Activated CD8-positive, alpha-beta T cell treated with anti-CD3 and anti-CD28 coated beads for 36 hours (primary cell): ENCODE measurements at regions of chr17 and their contacts with region 1.

Region 1: DNA sequence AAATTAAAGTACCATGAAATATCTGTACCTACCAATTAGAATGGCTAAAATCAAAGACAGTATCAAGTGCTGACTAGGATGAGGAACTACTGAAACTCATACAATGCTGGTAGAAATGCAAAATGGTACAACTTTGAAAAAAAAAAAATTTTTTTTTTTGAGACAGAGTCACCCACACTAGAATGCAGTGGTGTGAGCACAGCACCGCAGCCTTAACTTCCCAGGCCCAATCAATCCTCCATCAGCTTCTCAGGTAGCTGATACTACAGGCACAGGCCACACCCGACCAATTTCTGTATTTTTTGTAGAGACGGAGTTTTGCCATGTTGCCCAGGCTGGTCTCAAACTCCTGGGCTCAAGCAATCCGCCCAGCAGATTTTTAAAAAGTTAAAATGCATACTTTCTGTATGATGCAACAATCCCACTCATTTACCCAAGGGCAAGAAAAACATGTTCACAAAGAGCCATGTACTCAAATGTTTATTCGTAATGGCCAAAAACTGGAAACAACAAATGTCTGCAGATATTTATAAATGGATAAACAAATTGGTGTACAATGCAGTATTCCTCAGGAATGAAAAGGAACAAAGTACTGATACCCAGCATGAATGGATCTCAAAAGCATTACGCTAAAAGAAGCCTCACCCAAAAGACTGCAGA is 8.7 kb downstream of the SMURF2 start:
- DNase-seq: no peak
- ATAC-seq: no peak
- H3K4me3 Mint-ChIP-seq: peak overlapping the region; percentile 45
- H3K27ac Mint-ChIP-seq: peak overlapping the region; percentile 77
- H3K4me1 Mint-ChIP-seq: peaks cover 48% of the 10 kb centered on the region
- H3K27me3 Mint-ChIP-seq: no peaks in the 10 kb centered on the region
- CTCF ChIP-seq: no peak

Region 2: GRCh38 chr17:64496786-64497564 is 156.5 kb before region 1 on chr17 and contains the start of gene POLG2:
- CTCF ChIA-PET with region 1: interaction called, 33 read pairs
- POLR2A ChIA-PET with region 1: interaction called, 24 read pairs
- intact Hi-C with region 1: no loop called
- DNase-seq: peak; percentile 97
- ATAC-seq: peak; percentile 83
- H3K4me3 Mint-ChIP-seq: peak within 1 kb of the TSS; percentile 100
- H3K27ac Mint-ChIP-seq: peak within 1 kb of the TSS; percentile 97
- H3K4me1 Mint-ChIP-seq: peaks cover 61% of the 10 kb centered on the region
- H3K27me3 Mint-ChIP-seq: no peaks in the 10 kb centered on the region
- CTCF ChIP-seq: peak; percentile 69
- total RNA-seq, gene POLG2: 37.3 to 41.1 TPM

Region 3: DNA sequence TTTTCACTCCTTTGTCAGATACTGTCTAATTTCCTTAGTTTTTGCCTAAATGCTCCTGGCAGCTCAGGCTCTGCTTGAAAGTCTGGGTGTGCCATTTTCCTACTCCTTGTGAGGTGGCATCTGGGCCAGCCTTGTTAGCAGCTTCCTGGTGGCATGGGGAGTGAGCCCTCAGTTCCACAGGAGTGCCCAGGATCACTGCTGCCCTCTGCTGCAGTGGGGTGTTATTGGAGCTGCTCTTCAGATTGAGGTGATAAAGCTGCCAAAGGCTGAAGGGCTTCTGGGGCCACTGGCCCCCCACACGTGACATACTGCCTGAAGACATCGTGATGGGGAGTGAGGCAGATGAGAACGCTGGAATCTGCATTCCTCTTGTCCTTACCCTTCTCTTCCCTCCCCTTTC is 119.3 kb before region 1 on chr17:
- CTCF ChIA-PET with region 1: interaction called, 19 read pairs
- POLR2A ChIA-PET with region 1: interaction called, 4 read pairs
- intact Hi-C with region 1: no loop called
- DNase-seq: no peak
- ATAC-seq: peak; percentile 45
- H3K4me3 Mint-ChIP-seq: no peak overlapping the region
- H3K27ac Mint-ChIP-seq: peak overlapping the region; percentile 82
- H3K4me1 Mint-ChIP-seq: peaks cover 12% of the 10 kb centered on the region
- H3K27me3 Mint-ChIP-seq: no peaks in the 10 kb centered on the region
- CTCF ChIP-seq: peak; percentile 20

Region 4: GRCh38 chr17:64565563-64565962 is 87.9 kb before region 1 on chr17:
- CTCF ChIA-PET with region 1: interaction called, 24 read pairs
- POLR2A ChIA-PET with region 1: no interaction called
- intact Hi-C with region 1: loop called (anchors 10 kb)
- DNase-seq: no peak
- ATAC-seq: no peak
- H3K4me3 Mint-ChIP-seq: no peak overlapping the region
- H3K27ac Mint-ChIP-seq: no peak overlapping the region
- H3K4me1 Mint-ChIP-seq: peaks cover 3% of the 10 kb centered on the region
- H3K27me3 Mint-ChIP-seq: no peaks in the 10 kb centered on the region
- CTCF ChIP-seq: no peak

Region 5: DNA sequence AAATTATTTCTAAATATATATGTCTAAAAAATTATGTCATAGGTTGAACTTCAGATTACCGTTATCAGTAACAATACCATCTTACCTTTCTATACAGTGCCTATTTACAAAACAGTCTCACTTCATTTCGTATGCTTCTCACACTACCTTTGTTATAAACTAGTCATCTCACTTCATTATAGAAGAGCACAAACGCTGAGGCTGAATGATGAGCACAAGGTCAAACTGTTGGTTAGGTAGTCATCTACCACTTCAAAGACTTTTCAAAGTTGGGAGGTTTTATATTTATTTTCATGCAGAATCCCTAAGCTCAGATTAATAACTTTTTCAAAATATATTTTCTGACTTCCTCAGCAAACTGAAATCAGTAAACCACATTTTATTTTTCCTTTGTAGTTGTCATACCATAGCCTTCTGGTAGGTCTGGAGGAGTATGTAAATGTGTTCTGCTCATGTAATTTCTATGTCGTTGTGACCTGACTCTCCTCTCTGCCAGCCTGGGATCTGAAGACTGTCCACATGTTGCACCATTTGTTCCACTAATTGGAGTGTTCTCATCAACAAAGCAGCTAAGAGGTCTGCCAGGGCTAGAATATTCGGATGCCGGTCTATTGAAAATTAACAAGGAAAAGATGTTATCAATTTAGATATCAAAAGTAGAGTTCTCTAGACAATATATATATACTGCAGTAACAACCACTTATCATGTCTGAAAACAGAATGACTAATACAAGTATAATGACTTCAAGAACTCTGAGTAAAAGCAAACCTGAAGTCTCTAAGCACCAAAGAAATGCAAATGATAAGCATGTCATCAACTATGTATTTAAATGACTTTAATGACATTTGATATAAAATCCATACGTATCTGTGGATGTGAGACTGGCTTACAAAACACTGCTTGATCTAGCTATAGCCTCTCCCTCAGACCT is 72.8 kb before region 1 on chr17:
- CTCF ChIA-PET with region 1: interaction called, 10 read pairs
- POLR2A ChIA-PET with region 1: interaction called, 3 read pairs
- intact Hi-C with region 1: loop called (anchors 10 kb)
- DNase-seq: peak; percentile 12
- ATAC-seq: peak; percentile 87
- H3K4me3 Mint-ChIP-seq: peak overlapping the region; percentile 4
- H3K27ac Mint-ChIP-seq: peak overlapping the region; percentile 92
- H3K4me1 Mint-ChIP-seq: peaks cover 19% of the 10 kb centered on the region
- H3K27me3 Mint-ChIP-seq: no peaks in the 10 kb centered on the region
- CTCF ChIP-seq: no peak

Region 6: GRCh38 chr17:64635647-64636307 is 17.7 kb before region 1 on chr17:
- CTCF ChIA-PET with region 1: interaction called, 20 read pairs
- POLR2A ChIA-PET with region 1: interaction called, 3 read pairs
- intact Hi-C with region 1: no loop called
- DNase-seq: peak; percentile 45
- ATAC-seq: peak; percentile 69
- H3K4me3 Mint-ChIP-seq: peak overlapping the region; percentile 5
- H3K27ac Mint-ChIP-seq: peak overlapping the region; percentile 90
- H3K4me1 Mint-ChIP-seq: peaks cover 54% of the 10 kb centered on the region
- H3K27me3 Mint-ChIP-seq: no peaks in the 10 kb centered on the region
- CTCF ChIP-seq: no peak

Region 7: GRCh38 chr17:64736804-64737492 is 83.5 kb after region 1 on chr17:
- CTCF ChIA-PET with region 1: interaction called, 10 read pairs
- POLR2A ChIA-PET with region 1: no interaction called
- intact Hi-C with region 1: no loop called
- DNase-seq: peak; percentile 78
- ATAC-seq: peak; percentile 83
- H3K4me3 Mint-ChIP-seq: no peak overlapping the region
- H3K27ac Mint-ChIP-seq: no peak overlapping the region
- H3K4me1 Mint-ChIP-seq: peaks cover 23% of the 10 kb centered on the region
- H3K27me3 Mint-ChIP-seq: no peaks in the 10 kb centered on the region
- CTCF ChIP-seq: peak; percentile 80

Region 8: GRCh38 chr17:64747938-64748540 is 94.6 kb after region 1 on chr17:
- CTCF ChIA-PET with region 1: no interaction called
- POLR2A ChIA-PET with region 1: no interaction called
- intact Hi-C with region 1: no loop called
- DNase-seq: no peak
- ATAC-seq: no peak
- H3K4me3 Mint-ChIP-seq: no peak overlapping the region
- H3K27ac Mint-ChIP-seq: no peak overlapping the region
- H3K4me1 Mint-ChIP-seq: no peaks in the 10 kb centered on the region
- H3K27me3 Mint-ChIP-seq: no peaks in the 10 kb centered on the region
- CTCF ChIP-seq: no peak

Region 9: GRCh38 chr17:64771980-64772844 is 118.8 kb after region 1 on chr17:
- CTCF ChIA-PET with region 1: no interaction called
- POLR2A ChIA-PET with region 1: no interaction called
- intact Hi-C with region 1: no loop called
- DNase-seq: no peak
- ATAC-seq: no peak
- H3K4me3 Mint-ChIP-seq: no peak overlapping the region
- H3K27ac Mint-ChIP-seq: no peak overlapping the region
- H3K4me1 Mint-ChIP-seq: peaks cover 4% of the 10 kb centered on the region
- H3K27me3 Mint-ChIP-seq: no peaks in the 10 kb centered on the region
- CTCF ChIP-seq: no peak